HEK293 (cell line): ENCODE measurements at regions of chrX and their contacts with region 1.

Region 1: DNA sequence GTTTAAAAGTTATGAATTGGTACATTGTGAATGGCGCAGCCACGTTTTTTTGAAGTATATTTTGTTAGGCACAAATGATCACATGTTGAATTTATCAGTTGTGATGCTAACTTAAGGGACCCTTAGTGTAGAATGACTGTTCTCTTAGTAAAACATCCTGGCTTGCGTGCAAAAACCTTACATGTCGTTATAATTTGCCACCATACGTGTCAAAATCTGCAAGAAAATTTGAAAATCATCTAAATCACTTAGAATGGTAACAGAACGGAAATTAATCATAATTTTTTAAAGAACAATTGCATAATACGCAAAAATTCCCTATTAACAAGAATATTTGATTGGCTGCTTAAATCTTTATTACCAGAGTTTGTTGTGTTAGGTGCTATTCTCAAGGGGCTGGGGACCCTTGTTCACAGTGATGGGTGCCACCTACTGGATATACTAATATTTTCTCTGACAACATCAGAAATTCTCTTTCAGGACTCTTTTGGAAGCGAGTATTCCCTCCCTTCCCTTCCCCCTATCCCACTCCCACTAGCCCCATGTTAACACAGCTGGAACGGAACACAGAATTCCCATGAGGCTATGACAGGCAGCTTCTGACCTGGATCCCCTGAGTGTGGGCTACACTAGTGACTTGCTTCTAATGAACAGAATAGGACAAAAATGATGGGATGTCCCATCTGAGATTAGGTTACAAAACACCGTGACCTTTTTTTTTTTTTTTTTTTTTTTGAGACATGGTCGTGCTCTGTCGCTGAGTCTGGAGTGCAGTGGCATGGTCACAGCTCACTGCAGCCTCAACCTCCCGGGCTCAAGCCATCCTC is 71.8 kb downstream of the SUPT20HL2 start:
- H3K4me3 ChIP-seq: no peak overlapping the region
- H3K27ac ChIP-seq: no peak overlapping the region
- H3K4me1 ChIP-seq: peaks cover 12% of the 10 kb centered on the region
- CTCF ChIP-seq: no peak; the same call in 1 of the 2 replicates

Region 2: DNA sequence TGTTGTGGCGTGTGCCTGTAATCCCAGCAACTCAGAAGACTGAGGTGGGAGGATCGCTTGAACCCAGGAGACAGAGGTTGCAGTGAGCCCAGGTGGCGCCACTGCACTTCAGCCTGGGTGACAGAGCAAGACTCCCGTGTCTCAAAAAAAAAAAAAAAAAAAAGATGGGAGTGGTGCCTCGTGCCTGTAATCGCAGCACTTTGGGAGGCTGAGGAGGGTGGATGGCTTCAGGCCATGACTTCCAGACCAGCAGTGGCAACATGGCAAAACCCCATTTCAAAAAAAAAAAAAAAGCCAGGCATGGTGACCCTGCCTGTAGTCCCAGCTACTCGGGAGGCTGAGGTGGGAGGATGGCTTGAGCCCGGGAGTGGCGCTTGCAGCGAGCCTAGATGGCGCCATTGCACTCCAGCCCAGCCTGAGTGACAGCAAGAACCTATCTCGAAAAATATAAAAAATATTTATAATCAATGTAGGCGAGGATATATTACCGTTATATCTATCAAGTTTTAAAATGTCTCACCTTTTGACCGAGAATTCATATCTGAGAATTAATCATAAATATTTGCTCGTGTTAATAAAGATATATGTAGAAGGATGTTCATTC is 160.3 kb before region 1 on chrX:
- CTCF ChIA-PET with region 1: interaction called, 28 read pairs
- POLR2A ChIA-PET with region 1: interaction called, 3 read pairs
- H3K4me3 ChIP-seq: peak overlapping the region; percentile 19; the same call in 1 of the 2 replicates
- H3K27ac ChIP-seq: peak overlapping the region; percentile 3; the same call in 1 of the 2 replicates
- H3K4me1 ChIP-seq: no peaks in the 10 kb centered on the region
- CTCF ChIP-seq: peak; percentile 79; the same call in 1 of the 2 replicates

Region 3: GRCh38 chrX:24231131-24231540 is 10.9 kb before region 1 on chrX:
- CTCF ChIA-PET with region 1: interaction called, 26 read pairs
- POLR2A ChIA-PET with region 1: no interaction called
- H3K4me3 ChIP-seq: no peak overlapping the region
- H3K27ac ChIP-seq: no peak overlapping the region
- H3K4me1 ChIP-seq: no peaks in the 10 kb centered on the region; the same call in 1 of the 2 replicates
- CTCF ChIP-seq: no peak

Region 4: DNA sequence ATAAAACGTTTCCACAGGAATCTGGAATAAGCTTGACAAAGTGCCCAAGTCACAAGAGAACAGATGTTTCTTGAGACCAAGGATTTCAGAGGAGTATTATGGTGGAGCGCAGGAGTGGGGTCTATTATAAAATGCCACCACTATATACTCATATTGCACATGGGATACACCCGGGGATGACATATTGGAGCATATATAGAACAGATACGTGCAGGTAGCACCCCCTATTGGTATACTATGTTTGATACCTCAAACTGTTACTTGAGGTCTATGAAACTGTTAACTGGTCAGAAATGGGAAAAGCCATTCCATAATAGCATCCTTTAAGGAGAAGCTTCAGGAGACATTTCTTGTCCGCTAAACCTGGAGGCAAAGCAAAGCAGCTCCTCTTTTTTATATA is 319.1 kb after region 1 on chrX:
- CTCF ChIA-PET with region 1: no interaction called
- POLR2A ChIA-PET with region 1: no interaction called
- H3K4me3 ChIP-seq: no peak overlapping the region
- H3K27ac ChIP-seq: no peak overlapping the region
- H3K4me1 ChIP-seq: no peaks in the 10 kb centered on the region
- CTCF ChIP-seq: no peak